ENCODE measurements at regions of chr6 and their contacts with region 1.

Region 1: DNA sequence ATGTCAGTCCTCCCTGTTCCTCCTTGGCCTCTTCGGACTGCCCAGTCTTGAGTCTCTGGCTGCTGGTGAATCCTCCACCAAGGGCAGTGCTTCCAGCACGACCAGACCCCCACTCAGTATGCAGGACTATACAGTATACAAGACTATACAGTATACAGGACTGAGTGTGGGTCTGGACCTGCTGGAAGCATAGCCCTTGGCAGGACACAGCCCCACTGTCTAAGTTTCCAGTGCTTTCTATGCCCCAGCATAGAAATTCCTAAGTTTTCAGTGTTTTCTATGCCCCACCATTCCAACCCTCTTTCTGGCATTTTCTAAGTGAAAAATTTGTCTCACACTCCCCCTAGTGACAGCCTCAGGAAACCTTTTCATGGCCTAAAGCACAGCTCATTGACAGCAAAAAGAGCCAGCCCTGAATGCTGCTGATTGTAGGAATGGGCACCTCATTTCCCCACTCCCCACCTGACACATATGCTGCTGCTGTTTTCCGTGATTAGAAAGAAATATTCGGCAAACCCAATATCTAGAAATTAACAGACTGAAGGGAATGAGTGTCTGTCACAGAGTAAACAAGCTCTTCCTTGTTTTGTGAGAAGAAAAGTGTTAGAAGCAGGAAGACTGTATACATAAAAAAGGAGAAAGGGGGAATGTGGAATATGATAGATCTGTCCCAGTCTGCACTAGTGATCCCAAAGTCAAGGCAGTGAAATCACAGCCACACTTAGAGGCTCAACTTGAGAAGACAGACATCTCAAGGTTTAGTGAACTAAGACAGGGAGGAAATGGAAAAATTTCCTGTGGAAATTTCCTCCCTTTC is 206.9 kb downstream of the IBTK start:
- H3K4me3 ChIP-seq: no peak overlapping the region
- H3K27ac ChIP-seq: no peak overlapping the region
- H3K4me1 ChIP-seq: no peaks in the 10 kb centered on the region
- CTCF ChIP-seq: peak; percentile 83

Region 2: DNA sequence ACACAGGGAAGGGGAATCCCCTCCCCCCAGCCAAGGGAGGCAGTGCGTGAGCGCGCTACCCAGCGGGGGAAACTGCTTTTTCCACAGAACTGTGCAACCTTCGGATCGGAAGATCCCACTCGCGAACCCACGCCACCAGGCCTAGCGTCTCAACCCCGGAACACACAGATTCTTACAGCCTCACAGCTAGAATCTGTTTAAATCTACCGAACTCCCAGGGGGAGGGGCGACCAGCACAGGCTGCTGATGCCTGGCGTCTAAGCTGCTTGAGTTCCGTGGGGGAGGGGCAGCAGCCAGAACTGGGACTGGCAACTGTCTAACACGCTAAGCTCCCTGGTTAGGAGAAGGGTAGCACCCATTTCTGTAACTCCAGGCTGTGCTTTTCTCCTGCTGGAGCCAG is 70.8 kb before region 1 on chr6:
- CTCF ChIA-PET with region 1: no interaction called
- POLR2A ChIA-PET with region 1: no interaction called
- H3K4me3 ChIP-seq: no peak overlapping the region
- H3K27ac ChIP-seq: no peak overlapping the region
- H3K4me1 ChIP-seq: no peaks in the 10 kb centered on the region
- CTCF ChIP-seq: no peak

Region 3: DNA sequence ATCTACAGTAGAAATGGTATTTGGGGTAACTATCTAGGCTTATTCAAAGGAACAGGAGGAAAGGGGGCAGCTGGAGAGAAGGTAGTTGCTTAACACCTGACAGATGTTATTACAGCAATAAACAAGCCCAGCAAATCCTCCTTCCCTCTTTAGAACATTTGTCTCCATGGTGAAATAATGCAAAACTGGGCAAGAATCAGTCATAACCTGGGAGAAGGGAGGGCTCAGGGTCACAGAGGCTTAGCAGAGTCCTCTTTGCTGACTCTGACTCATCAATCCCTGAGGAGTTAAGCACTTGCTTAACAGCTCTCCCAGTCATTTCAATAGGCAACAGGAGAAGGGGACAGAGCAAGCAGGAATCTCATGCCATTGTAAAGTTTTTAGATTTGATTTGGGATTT is 23.3 kb before region 1 on chr6:
- CTCF ChIA-PET with region 1: interaction called, 13 read pairs
- POLR2A ChIA-PET with region 1: no interaction called
- H3K4me3 ChIP-seq: no peak overlapping the region
- H3K27ac ChIP-seq: no peak overlapping the region
- H3K4me1 ChIP-seq: no peaks in the 10 kb centered on the region
- CTCF ChIP-seq: no peak

Region 4: GRCh38 chr6:82022601-82023102 is 18.0 kb before region 1 on chr6:
- CTCF ChIA-PET with region 1: interaction called, 13 read pairs
- POLR2A ChIA-PET with region 1: no interaction called
- H3K4me3 ChIP-seq: no peak overlapping the region
- H3K27ac ChIP-seq: no peak overlapping the region
- H3K4me1 ChIP-seq: no peaks in the 10 kb centered on the region
- CTCF ChIP-seq: no peak